ENCODE measurements at regions of chr12 and their contacts with region 1.

Region 1: GRCh38 chr12:4215229-4216186 is 58.1 kb upstream of the CCND2 start:
- DNase-seq: peak; percentile 96 to 99 (median 99)
- H3K4me3 ChIP-seq: peak overlapping the region in 6 of 7 experiments; percentile 20 to 62 (median 36)
- H3K27ac ChIP-seq: peak overlapping the region in 1 of 2 experiments; percentile 35
- H3K4me1 ChIP-seq: peaks cover 13 to 38% (median 30%) of the 10 kb centered on the region in 4 experiments
- H3K27me3 ChIP-seq: no peaks in the 10 kb centered on the region

Region 2: DNA sequence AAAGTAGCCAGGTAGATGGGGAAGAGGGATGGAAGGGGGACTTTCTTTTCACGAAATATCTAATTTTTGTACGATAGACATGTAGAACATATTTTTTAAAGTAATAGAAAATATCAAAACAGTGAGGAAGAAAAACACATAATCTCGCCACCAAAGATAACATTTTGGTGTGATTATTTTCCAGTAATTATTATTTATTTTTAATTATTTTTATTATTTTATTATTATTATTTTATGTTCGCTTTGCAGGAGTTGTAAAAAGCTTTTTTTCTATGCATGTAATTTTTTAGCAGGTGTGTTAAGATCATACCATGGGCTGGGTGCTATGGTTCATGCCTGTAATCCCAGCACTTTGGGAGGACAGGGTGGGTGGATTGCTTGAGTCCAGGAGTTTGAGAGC is 27.6 kb before region 1 on chr12:
- CTCF ChIA-PET with region 1: no interaction called
- POLR2A ChIA-PET with region 1: no interaction called
- DNase-seq: no peak
- H3K4me3 ChIP-seq: no peak overlapping the region
- H3K27ac ChIP-seq: no peak overlapping the region
- H3K4me1 ChIP-seq: no peaks in the 10 kb centered on the region
- H3K27me3 ChIP-seq: no peaks in the 10 kb centered on the region

Region 3: DNA sequence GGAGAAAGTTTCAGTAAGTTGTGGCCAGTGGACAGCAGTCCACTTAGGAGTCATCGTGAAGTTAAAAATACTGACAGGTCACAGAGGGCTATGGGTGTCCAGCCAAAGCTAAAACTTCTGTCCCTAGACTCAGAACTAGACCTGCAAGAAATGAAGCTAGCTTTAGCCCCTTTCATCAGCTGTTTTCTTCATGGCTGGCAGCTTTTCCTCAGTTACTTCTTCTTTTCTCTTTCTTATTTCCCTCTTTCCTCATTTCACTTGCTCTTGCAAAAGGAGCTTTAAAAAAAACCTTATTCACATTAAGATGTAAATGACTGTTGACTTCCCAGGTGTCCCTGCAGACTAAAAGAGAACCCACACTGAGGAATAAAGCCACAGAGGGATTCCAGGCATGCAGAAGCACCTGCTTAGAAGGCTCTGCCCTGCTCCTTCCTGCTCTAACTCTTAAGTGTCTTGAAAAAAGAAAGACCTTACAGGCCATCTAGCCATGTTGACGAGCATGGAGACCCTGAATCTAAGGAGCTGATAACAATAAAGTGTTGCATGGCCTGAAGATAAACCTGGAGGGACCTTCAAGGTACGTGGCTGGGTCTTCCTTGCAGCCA is 11.6 kb before region 1 on chr12:
- CTCF ChIA-PET with region 1: interaction called, 12 read pairs
- POLR2A ChIA-PET with region 1: no interaction called
- DNase-seq: peak in 2 of 3 donors; percentile 25 to 26
- H3K4me3 ChIP-seq: peak overlapping the region in 1 of 7 experiments; percentile 15
- H3K27ac ChIP-seq: no peak overlapping the region
- H3K4me1 ChIP-seq: peaks cover 7 to 20% (median 11%) of the 10 kb centered on the region in 4 experiments
- H3K27me3 ChIP-seq: no peaks in the 10 kb centered on the region

Measured in common myeloid progenitor, CD34-positive (primary cell).